CD4-positive, alpha-beta memory T cell (primary cell): ENCODE measurements at regions of chr16 and their contacts with region 1.

Region 1: GRCh38 chr16:75238132-75238852 is 13.1 kb downstream of the BCAR1 start:
- DNase-seq: no peak
- H3K4me3 ChIP-seq: no peak overlapping the region
- H3K4me3 Mint-ChIP-seq: no peak overlapping the region
- H3K27ac ChIP-seq: no peak overlapping the region
- H3K27ac Mint-ChIP-seq: no peak overlapping the region
- H3K4me1 ChIP-seq: peaks cover 6% of the 10 kb centered on the region
- H3K4me1 Mint-ChIP-seq: peaks cover 0 to 5% (median 2%) of the 10 kb centered on the region in 4 donors
- H3K27me3 ChIP-seq: no peaks in the 10 kb centered on the region
- H3K27me3 Mint-ChIP-seq: no peaks in the 10 kb centered on the region

Region 2: GRCh38 chr16:75351183-75351582 is 112.9 kb after region 1 on chr16:
- CTCF ChIA-PET with region 1: no interaction called
- POLR2A ChIA-PET with region 1: no interaction called
- intact Hi-C with region 1: no loop called
- DNase-seq: no peak
- H3K4me3 ChIP-seq: no peak overlapping the region
- H3K4me3 Mint-ChIP-seq: no peak overlapping the region
- H3K27ac ChIP-seq: no peak overlapping the region
- H3K27ac Mint-ChIP-seq: no peak overlapping the region
- H3K4me1 ChIP-seq: no peaks in the 10 kb centered on the region
- H3K4me1 Mint-ChIP-seq: peaks cover 0 to 3% (median 1%) of the 10 kb centered on the region in 4 donors
- H3K27me3 ChIP-seq: no peaks in the 10 kb centered on the region
- H3K27me3 Mint-ChIP-seq: no peaks in the 10 kb centered on the region

Region 3: GRCh38 chr16:75361936-75362335 is 123.6 kb after region 1 on chr16:
- CTCF ChIA-PET with region 1: interaction called, 14 read pairs
- POLR2A ChIA-PET with region 1: no interaction called
- intact Hi-C with region 1: no loop called
- DNase-seq: no peak
- H3K4me3 ChIP-seq: no peak overlapping the region
- H3K4me3 Mint-ChIP-seq: no peak overlapping the region
- H3K27ac ChIP-seq: no peak overlapping the region
- H3K27ac Mint-ChIP-seq: no peak overlapping the region
- H3K4me1 ChIP-seq: no peaks in the 10 kb centered on the region
- H3K4me1 Mint-ChIP-seq: peaks cover 0 to 2% (median 0%) of the 10 kb centered on the region in 4 donors
- H3K27me3 ChIP-seq: no peaks in the 10 kb centered on the region
- H3K27me3 Mint-ChIP-seq: no peaks in the 10 kb centered on the region

Region 4: DNA sequence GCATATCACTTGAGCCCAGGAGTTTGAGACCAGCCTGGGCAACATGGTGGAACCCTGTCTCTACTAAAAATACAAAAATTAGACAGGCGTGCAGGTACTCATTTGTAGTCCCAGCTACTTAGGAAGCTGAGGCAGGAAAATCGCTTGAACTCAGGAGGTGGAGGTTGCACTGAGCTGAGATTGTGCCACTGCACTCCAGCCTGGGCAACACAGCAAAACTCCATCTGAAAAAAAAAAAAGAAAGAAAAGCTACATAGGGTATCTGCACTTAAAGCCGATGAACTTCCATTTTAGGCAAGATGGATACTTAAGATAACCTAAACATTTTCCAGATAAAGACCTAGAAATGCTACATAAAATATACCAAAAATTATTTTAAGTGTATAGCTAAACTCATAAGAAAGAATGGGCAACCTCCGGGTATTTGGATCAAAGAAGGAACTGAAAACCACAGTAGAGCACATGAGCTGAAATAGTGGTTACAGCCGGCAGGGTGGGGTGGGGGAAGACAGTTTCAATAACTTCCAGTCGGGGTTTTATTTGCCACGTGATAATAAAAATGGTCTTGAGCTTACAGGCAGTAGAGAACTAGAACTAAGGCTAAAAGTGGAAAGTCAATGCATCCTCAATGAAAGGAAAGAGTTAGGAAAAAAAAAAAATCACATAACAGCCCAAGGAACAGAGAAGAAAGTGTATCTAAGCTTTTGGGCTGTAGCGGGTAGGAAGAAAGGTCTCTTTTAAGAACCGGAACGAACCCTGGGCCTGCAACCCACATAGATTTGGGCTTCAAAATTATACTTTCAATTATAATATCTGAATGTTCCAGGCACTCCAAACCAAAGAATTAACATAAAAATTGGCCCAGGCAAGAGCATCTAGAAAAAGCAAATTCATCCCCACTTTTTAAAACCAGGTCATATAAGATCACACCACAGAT is 141.9 kb after region 1 on chr16:
- CTCF ChIA-PET with region 1: interaction called, 296 read pairs
- POLR2A ChIA-PET with region 1: interaction called, 13 read pairs
- intact Hi-C with region 1: loop called (anchors 1 kb)
- DNase-seq: peak; percentile 65 to 74 (median 68)
- H3K4me3 ChIP-seq: no peak overlapping the region
- H3K4me3 Mint-ChIP-seq: peak overlapping the region; percentile 67 to 89 (median 82)
- H3K27ac ChIP-seq: peak overlapping the region; percentile 27
- H3K27ac Mint-ChIP-seq: peak overlapping the region; percentile 68 to 95 (median 92)
- H3K4me1 ChIP-seq: peaks cover 50% of the 10 kb centered on the region
- H3K4me1 Mint-ChIP-seq: peaks cover 36 to 59% (median 44%) of the 10 kb centered on the region in 4 donors
- H3K27me3 ChIP-seq: no peaks in the 10 kb centered on the region
- H3K27me3 Mint-ChIP-seq: no peaks in the 10 kb centered on the region

Region 5: DNA sequence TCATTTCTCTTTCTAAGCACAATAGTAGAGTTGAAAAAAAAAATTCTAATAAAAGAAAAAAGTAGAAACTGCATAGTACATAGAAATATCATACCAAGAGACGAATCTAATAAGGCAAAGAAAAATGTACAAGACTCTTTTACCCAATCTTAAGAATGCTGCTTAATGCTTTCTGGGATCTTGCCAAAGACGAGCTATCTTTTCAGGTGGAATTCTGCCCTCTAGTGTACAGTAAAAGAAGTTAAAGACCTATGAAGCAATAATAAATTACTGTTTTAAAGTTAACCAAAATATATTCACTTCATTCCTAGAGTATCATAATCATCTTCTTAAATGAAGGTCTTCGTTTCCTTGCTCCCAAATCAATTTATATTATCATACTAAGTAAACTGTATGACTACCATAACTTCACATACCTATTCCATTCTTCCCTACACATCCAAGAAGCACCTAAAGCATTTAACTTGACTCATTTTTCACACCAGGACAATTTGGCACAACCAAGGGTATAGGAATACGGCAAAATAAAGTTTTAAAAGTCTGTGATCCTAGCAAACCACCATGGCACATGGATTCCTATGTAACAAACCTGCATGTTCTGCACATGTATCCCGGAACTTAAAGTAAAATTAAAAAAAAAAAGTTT is 147.3 kb after region 1 on chr16:
- CTCF ChIA-PET with region 1: interaction called, 296 read pairs
- POLR2A ChIA-PET with region 1: interaction called, 13 read pairs
- intact Hi-C with region 1: loop called (anchors 1 kb)
- DNase-seq: peak in 4 of 5 donors; percentile 53 to 63 (median 60)
- H3K4me3 ChIP-seq: no peak overlapping the region
- H3K4me3 Mint-ChIP-seq: no peak overlapping the region
- H3K27ac ChIP-seq: no peak overlapping the region
- H3K27ac Mint-ChIP-seq: no peak overlapping the region
- H3K4me1 ChIP-seq: peaks cover 26% of the 10 kb centered on the region
- H3K4me1 Mint-ChIP-seq: peaks cover 20 to 38% (median 34%) of the 10 kb centered on the region in 4 donors
- H3K27me3 ChIP-seq: no peaks in the 10 kb centered on the region
- H3K27me3 Mint-ChIP-seq: no peaks in the 10 kb centered on the region

Region 6: DNA sequence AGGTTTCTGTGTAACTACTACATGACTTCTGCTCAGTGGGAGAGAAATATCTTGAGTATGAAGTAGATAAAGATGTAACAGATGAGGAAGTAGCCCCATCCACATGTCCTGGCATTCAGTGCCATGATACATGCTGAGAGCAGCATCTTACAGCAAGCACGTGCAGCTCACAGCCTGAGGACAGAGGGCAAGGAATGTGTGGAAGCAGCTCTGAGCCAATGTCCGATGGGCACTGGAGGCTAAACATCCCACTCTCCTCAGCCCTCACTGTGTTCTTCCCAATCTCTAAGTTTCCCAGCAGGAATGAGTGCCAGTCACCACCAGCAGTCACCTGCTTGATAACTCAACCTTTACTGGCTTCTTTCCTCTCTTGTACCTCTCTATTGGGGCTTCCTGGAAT is 154.6 kb after region 1 on chr16:
- CTCF ChIA-PET with region 1: interaction called, 296 read pairs
- POLR2A ChIA-PET with region 1: interaction called, 3 read pairs
- intact Hi-C with region 1: no loop called
- DNase-seq: no peak
- H3K4me3 ChIP-seq: no peak overlapping the region
- H3K4me3 Mint-ChIP-seq: no peak overlapping the region
- H3K27ac ChIP-seq: no peak overlapping the region
- H3K27ac Mint-ChIP-seq: peak overlapping the region in 1 of 7 donors; percentile 35
- H3K4me1 ChIP-seq: no peaks in the 10 kb centered on the region
- H3K4me1 Mint-ChIP-seq: peaks cover 5 to 20% (median 13%) of the 10 kb centered on the region in 4 donors
- H3K27me3 ChIP-seq: no peaks in the 10 kb centered on the region
- H3K27me3 Mint-ChIP-seq: no peaks in the 10 kb centered on the region

Region 7: DNA sequence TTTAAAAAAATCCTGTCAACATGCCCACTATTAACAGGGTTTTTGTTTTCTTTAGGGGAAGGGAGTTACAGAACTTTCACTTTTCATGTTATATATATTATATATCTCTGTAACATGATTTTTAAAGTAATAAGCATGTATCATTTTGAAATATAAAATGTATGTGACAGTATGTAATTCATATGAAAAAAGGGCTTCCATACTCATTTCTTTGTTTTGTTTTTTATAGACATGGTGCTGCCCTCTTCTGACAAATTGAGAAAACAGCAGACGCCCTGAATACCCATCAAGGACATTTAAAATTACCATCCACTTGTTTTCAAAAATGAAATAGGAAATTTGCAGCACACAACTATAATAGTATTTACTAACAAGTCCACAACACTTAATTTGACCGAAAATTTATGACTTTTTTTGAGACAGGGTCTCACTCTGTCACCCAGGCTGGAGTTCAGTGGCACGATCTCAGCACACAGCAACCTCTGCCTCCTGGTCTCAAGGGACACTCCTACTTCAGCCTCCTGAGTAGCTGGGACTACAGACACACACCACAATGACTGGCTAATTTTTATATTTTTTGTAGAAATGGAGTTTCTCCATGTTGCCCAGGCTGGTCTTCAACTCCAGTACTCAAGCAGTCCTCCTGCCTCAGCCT is 164.7 kb after region 1 on chr16:
- CTCF ChIA-PET with region 1: interaction called, 118 read pairs
- POLR2A ChIA-PET with region 1: no interaction called
- intact Hi-C with region 1: loop called (anchors 1 kb)
- DNase-seq: peak in 4 of 5 donors; percentile 23 to 35 (median 32)
- H3K4me3 ChIP-seq: no peak overlapping the region
- H3K4me3 Mint-ChIP-seq: no peak overlapping the region
- H3K27ac ChIP-seq: no peak overlapping the region
- H3K27ac Mint-ChIP-seq: peak overlapping the region in 1 of 7 donors; percentile 51
- H3K4me1 ChIP-seq: no peaks in the 10 kb centered on the region
- H3K4me1 Mint-ChIP-seq: peaks cover 0 to 3% (median 1%) of the 10 kb centered on the region in 4 donors
- H3K27me3 ChIP-seq: no peaks in the 10 kb centered on the region
- H3K27me3 Mint-ChIP-seq: no peaks in the 10 kb centered on the region